ENCODE measurements at regions of chrX and their contacts with region 1.

Region 1: GRCh38 chrX:44898411-44899221 is 25.6 kb downstream of the KDM6A start:
- DNase-seq: no peak

Region 2: GRCh38 chrX:44152852-44153251 is 745.8 kb before region 1 on chrX:
- intact Hi-C with region 1: loop called in 1 of 2 experiments (anchors 10 kb)
- DNase-seq: no peak

Measured in posterior vena cava (tissue), 2 donors.